Activated naive CD4-positive, alpha-beta T cell treated with anti-CD3 and anti-CD28 coated beads for 36 hours (primary cell): ENCODE measurements at regions of chr10 and their contacts with region 1.

Region 1: GRCh38 chr10:43292755-43293676 is 26.2 kb upstream of the RASGEF1A start:
- DNase-seq: peak; percentile 65
- H3K4me3 Mint-ChIP-seq: no peak overlapping the region
- H3K27ac Mint-ChIP-seq: no peak overlapping the region
- H3K4me1 Mint-ChIP-seq: peaks cover 28% of the 10 kb centered on the region
- H3K27me3 Mint-ChIP-seq: peaks cover 2% of the 10 kb centered on the region

Region 2: DNA sequence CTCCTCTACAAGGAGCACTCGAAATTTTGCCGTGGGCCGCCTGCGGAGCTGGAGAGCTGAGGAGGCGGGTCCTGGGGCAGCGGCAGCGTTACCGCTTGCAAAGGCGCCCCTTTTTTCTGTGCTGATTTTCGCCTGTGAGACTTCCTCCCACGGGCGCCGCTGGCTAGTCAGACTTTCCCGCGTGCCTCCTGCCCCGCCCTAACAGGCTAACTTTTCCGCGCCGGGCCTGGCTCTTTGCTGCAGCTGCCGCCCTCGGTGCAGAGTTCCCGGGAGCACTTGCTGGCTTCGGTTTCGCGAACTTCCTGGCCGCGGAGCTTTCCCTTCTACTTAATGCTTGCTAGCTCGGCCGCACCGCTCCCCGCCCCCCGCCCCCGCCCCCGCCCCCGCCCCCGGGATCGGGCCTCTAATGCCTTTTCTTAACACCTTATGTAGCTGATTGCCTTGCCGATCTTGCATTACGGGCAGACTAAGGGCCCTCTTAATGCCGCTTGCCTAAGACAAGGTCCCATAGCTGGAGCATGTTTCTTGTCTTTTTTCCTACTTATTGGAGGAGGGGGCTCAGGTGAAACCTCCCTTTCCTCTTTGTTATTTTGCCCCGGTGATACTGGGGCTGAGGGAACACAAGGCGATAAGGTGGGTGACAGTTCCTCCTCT is 11.8 kb after region 1 on chr10:
- CTCF ChIA-PET with region 1: interaction called, 32 read pairs
- intact Hi-C with region 1: no loop called
- DNase-seq: peak; percentile 65
- H3K4me3 Mint-ChIP-seq: peak overlapping the region; percentile 59
- H3K27ac Mint-ChIP-seq: no peak overlapping the region
- H3K4me1 Mint-ChIP-seq: peaks cover 34% of the 10 kb centered on the region
- H3K27me3 Mint-ChIP-seq: peaks cover 4% of the 10 kb centered on the region

Region 3: DNA sequence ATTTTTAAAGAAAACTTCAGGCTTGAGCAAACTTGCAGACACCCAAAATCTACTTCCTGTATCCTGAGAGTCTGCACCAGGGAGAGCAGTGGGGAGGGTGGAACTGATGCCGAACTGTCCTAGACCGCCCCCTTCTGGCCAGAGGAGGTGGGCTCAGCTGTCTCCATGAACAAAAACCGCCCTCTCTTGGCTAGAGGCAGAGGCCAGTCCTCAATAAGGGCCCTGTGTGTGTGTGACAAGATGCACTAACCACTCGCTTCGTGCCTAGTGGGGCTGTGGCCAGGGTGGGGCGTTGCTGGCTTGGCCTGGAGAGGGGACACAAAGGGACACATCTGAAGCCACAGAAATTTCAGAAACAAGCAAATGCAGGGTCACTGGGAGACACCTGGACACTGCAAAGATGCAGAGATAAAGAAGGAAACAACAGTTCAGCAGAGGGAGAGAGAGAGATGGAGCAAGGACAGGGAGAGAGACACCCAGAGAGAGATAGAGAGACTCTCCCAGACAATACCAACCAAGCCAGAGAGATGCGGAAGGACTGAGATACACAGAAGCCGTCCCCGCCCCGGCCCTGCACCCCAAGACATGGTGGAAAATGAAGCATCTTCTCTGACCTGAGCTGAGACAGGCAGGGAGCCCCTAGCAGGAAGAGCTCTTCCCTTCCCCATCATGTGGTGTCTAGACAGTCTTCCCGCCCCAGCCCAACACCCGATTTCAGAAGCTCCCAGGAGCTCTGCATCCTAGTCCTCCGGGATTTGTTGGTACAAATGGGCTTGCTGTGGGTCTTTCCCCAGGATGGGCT is 55.7 kb after region 1 on chr10:
- CTCF ChIA-PET with region 1: interaction called, 80 read pairs
- intact Hi-C with region 1: loop called (anchors 1 kb)
- DNase-seq: peak; percentile 93
- H3K4me3 Mint-ChIP-seq: no peak overlapping the region
- H3K27ac Mint-ChIP-seq: no peak overlapping the region
- H3K4me1 Mint-ChIP-seq: peaks cover 16% of the 10 kb centered on the region
- H3K27me3 Mint-ChIP-seq: peaks cover 19% of the 10 kb centered on the region

Region 4: DNA sequence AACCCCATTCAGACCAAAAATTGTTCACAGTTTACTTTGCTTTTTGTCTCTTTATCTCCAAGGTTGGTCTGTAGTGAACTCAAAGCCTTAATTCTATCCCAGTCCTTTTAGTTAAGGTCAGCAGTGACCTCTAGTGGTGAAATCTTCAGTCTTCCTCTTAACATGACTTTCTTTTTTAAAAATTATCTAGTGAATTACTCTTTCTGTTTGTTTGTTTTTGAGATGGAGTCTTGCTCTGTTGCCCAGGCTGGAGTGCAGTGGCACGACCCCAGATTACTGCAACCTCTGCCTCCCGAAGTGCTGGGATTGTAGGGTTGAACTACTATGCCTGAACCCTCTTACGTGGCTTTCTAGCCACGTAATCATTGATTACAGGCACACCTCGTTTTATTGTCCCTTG is 168.9 kb after region 1 on chr10:
- CTCF ChIA-PET with region 1: interaction called, 46 read pairs
- intact Hi-C with region 1: loop called (anchors 1 kb)
- DNase-seq: peak; percentile 24
- H3K4me3 Mint-ChIP-seq: no peak overlapping the region
- H3K27ac Mint-ChIP-seq: no peak overlapping the region
- H3K4me1 Mint-ChIP-seq: peaks cover 12% of the 10 kb centered on the region
- H3K27me3 Mint-ChIP-seq: no peaks in the 10 kb centered on the region

Region 5: GRCh38 chr10:43648398-43649184 is 355.6 kb after region 1 on chr10 and contains the start of gene ZNF32:
- CTCF ChIA-PET with region 1: no interaction called
- intact Hi-C with region 1: loop called (anchors 10 kb)
- DNase-seq: peak; percentile 83
- H3K4me3 Mint-ChIP-seq: peak within 1 kb of the TSS; percentile 88
- H3K27ac Mint-ChIP-seq: peak within 1 kb of the TSS; percentile 86
- H3K4me1 Mint-ChIP-seq: peaks cover 18% of the 10 kb centered on the region
- H3K27me3 Mint-ChIP-seq: no peaks in the 10 kb centered on the region
- total RNA-seq, gene ZNF32: 17.8 to 17.9 TPM

Region 6: DNA sequence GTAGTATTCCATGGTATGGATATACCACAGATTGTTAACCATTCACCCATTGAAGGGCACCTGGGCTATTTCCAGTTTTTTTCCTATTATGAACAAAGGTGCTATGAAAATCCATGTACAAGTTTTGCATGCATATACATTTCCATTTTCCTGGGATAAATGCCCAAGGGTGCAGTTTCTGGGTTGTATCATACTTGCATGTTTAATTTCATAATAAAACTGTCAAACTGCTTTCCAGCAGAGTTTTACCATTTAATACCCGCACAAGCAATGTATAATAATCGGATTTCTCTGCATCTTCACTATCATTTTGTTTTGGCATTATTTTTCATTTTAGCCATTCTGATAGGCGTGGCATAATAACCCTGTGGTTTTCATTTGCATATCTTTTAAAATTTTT is 1246.2 kb after region 1 on chr10:
- CTCF ChIA-PET with region 1: no interaction called
- intact Hi-C with region 1: no loop called
- DNase-seq: no peak
- H3K4me3 Mint-ChIP-seq: no peak overlapping the region
- H3K27ac Mint-ChIP-seq: no peak overlapping the region
- H3K4me1 Mint-ChIP-seq: no peaks in the 10 kb centered on the region
- H3K27me3 Mint-ChIP-seq: no peaks in the 10 kb centered on the region